GM12878 (cell line): ENCODE measurements at regions of chr7 and their contacts with region 1.

Region 1: DNA sequence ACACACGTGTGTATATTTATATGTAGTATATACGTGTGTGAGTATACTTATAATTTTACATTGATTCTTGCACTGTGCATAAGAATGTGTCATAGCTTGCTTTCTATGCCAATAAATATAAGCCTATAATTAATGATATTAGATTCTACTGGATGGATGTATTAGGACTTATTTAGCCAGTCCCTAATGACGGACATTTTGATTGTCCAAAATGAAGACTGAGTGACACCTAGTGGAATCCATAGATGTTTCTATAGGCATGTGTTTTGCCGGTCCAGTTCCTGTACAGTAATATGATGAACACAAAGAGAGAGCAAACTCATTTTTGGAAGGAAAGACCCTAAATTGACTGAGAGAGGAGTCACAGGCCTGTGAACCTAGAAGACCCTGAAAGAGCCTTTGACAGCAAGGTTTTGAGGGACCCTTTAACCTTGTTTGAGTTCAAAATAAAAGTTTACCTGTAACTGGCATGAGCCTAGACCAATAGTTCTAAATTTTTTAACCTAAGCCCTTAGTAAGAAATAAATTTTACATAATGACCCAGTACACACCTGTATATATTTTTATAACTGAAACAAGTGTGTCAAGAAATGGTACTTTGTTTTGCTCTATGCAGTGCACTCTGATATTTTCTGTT is 42.4 kb upstream of the AGBL3 start:
- DNase-seq: no peak
- ATAC-seq: peak; percentile 97
- H3K4me3 ChIP-seq: no peak overlapping the region
- H3K27ac ChIP-seq: no peak overlapping the region
- H3K4me1 ChIP-seq: no peaks in the 10 kb centered on the region
- H3K27me3 ChIP-seq: no peaks in the 10 kb centered on the region
- CTCF ChIP-seq: peak; percentile 49 to 66 (median 55)
- EP300 ChIP-seq: no peak
- POLR2A ChIP-seq: no peak
- RAD21 ChIP-seq: peak; percentile 88

Region 2: GRCh38 chr7:134514663-134515062 is 429.2 kb before region 1 on chr7:
- CTCF ChIA-PET with region 1: interaction called, 4 read pairs
- POLR2A ChIA-PET with region 1: no interaction called
- RAD21 ChIA-PET with region 1: no interaction called
- SMC1A ChIA-PET with region 1: no interaction called
- in situ Hi-C with region 1: no loop called
- intact Hi-C with region 1: loop called (anchors 10 kb)
- DNase-seq: peak; percentile 13
- ATAC-seq: peak; percentile 84
- H3K4me3 ChIP-seq: no peak overlapping the region
- H3K27ac ChIP-seq: no peak overlapping the region
- H3K4me1 ChIP-seq: no peaks in the 10 kb centered on the region
- H3K27me3 ChIP-seq: no peaks in the 10 kb centered on the region; a peak in 1 of 4 replicates
- CTCF ChIP-seq: peak; percentile 63 to 76 (median 73)
- EP300 ChIP-seq: no peak
- POLR2A ChIP-seq: no peak
- RAD21 ChIP-seq: peak; percentile 69

Region 3: DNA sequence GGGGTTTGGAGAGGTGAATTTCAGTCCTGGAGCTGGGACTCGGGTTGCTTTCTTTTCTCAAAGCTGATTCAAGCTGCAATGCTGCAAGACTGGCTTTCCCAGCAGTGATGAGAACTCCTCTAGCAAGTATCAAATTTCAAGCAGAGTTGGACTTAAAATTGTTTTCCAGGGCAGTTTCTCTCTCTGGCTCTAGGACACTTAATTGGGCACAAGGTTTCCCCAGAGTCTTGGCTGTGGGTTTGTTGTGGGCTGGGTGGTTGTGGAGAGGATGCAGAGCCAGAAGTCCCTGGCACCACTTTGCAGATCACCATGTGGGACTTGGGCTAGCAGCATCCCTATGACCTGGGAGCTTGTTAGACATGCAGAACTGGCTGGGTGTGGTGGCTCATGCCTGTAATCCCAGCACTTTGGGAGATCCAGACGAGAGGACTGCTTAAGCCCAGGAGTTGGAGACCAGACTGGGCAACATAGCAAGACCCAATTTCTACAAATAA is 378.2 kb before region 1 on chr7:
- CTCF ChIA-PET with region 1: no interaction called
- POLR2A ChIA-PET with region 1: no interaction called
- RAD21 ChIA-PET with region 1: no interaction called
- SMC1A ChIA-PET with region 1: no interaction called
- in situ Hi-C with region 1: no loop called
- intact Hi-C with region 1: no loop called
- DNase-seq: no peak
- ATAC-seq: no peak
- H3K4me3 ChIP-seq: no peak overlapping the region
- H3K27ac ChIP-seq: no peak overlapping the region
- H3K4me1 ChIP-seq: no peaks in the 10 kb centered on the region
- H3K27me3 ChIP-seq: no peaks in the 10 kb centered on the region
- CTCF ChIP-seq: no peak
- EP300 ChIP-seq: no peak
- POLR2A ChIP-seq: no peak
- RAD21 ChIP-seq: no peak

Region 4: DNA sequence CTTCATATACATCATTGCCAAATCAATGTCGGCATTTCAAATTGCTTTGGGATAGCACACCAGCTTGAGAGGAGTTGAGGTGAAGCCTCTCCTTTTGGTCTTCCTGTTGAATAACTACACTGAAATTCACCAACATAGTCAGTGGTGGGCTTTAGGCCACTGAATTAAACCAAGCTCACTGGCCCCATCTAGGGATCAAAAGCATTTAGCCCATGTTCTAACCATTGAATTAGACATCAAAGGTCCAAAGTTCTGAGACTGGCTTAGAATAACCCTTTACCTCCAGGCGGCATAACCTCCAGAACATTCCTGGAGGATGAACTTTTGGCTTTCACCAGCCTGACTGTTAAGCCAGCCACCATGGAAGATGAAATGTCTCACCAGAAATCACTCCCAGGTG is 242.6 kb before region 1 on chr7:
- CTCF ChIA-PET with region 1: interaction called, 7 read pairs
- POLR2A ChIA-PET with region 1: no interaction called
- RAD21 ChIA-PET with region 1: interaction called, 3 read pairs
- SMC1A ChIA-PET with region 1: interaction called, 8 read pairs
- in situ Hi-C with region 1: no loop called
- intact Hi-C with region 1: loop called (anchors 5 kb)
- DNase-seq: no peak
- ATAC-seq: peak; percentile 75
- H3K4me3 ChIP-seq: no peak overlapping the region
- H3K27ac ChIP-seq: no peak overlapping the region
- H3K4me1 ChIP-seq: no peaks in the 10 kb centered on the region
- H3K27me3 ChIP-seq: peaks cover 0 to 7% of the 10 kb centered on the region in 2 experiments; a peak in 3 of 4 replicates
- CTCF ChIP-seq: peak; percentile 29 to 56 (median 47); a peak in 5 of 6 replicates
- EP300 ChIP-seq: no peak
- POLR2A ChIP-seq: no peak
- RAD21 ChIP-seq: peak; percentile 62

Region 5: GRCh38 chr7:134750083-134751062 is 193.5 kb before region 1 on chr7:
- CTCF ChIA-PET with region 1: interaction called, 16 read pairs
- POLR2A ChIA-PET with region 1: no interaction called
- RAD21 ChIA-PET with region 1: interaction called, 7 read pairs
- SMC1A ChIA-PET with region 1: interaction called, 9 read pairs
- in situ Hi-C with region 1: no loop called
- intact Hi-C with region 1: loop called (anchors 10 kb)
- DNase-seq: no peak
- ATAC-seq: peak; percentile 94
- H3K4me3 ChIP-seq: no peak overlapping the region
- H3K27ac ChIP-seq: no peak overlapping the region
- H3K4me1 ChIP-seq: no peaks in the 10 kb centered on the region
- H3K27me3 ChIP-seq: 0 out of 4 replicates have a peak, but pooled peaks cover 0 to 2% of the 10 kb centered on the region in 2 experiments
- CTCF ChIP-seq: peak; percentile 62 to 97 (median 86)
- EP300 ChIP-seq: no peak
- POLR2A ChIP-seq: no peak
- RAD21 ChIP-seq: peak; percentile 68

Region 6: GRCh38 chr7:134878731-134879295 is 65.1 kb before region 1 on chr7:
- CTCF ChIA-PET with region 1: interaction called, 32 read pairs
- POLR2A ChIA-PET with region 1: interaction called, 3 read pairs
- RAD21 ChIA-PET with region 1: interaction called, 13 read pairs
- SMC1A ChIA-PET with region 1: interaction called, 16 read pairs
- in situ Hi-C with region 1: no loop called
- intact Hi-C with region 1: loop called (anchors 5 kb)
- DNase-seq: no peak
- ATAC-seq: peak; percentile 66
- H3K4me3 ChIP-seq: no peak overlapping the region
- H3K27ac ChIP-seq: no peak overlapping the region
- H3K4me1 ChIP-seq: no peaks in the 10 kb centered on the region
- H3K27me3 ChIP-seq: peaks cover 0 to 3% of the 10 kb centered on the region in 2 experiments; a peak in 2 of 4 replicates
- CTCF ChIP-seq: peak in 1 of 3 experiments; percentile 27; a peak in 1 of 6 replicates
- EP300 ChIP-seq: no peak
- POLR2A ChIP-seq: no peak
- RAD21 ChIP-seq: peak; percentile 43; the same call in 1 of the 2 replicates

Region 7: DNA sequence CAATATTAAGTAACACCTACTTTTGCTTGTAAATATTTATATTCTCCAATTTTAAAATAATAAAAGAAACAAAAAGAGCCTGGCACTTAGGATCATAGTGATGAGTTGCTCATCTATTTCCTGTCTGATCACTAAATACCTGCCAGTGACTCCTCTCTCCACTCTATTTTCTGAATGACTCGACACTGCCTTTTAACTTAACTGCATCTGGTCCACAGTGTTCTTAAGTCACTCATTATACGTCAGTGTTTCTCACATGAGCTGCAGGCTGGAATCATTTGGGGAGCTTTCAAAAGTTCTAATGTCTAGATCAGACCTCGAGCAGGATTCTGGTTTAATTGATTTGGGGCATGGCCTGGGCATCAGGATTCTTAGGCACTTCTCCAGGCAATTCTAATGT is 35.6 kb before region 1 on chr7:
- CTCF ChIA-PET with region 1: interaction called, 10 read pairs
- POLR2A ChIA-PET with region 1: interaction called, 3 read pairs
- RAD21 ChIA-PET with region 1: interaction called, 42 read pairs
- SMC1A ChIA-PET with region 1: interaction called, 9 read pairs
- in situ Hi-C with region 1: no loop called
- intact Hi-C with region 1: no loop called
- DNase-seq: no peak
- ATAC-seq: peak; percentile 78
- H3K4me3 ChIP-seq: no peak overlapping the region
- H3K27ac ChIP-seq: no peak overlapping the region
- H3K4me1 ChIP-seq: peaks cover 4% of the 10 kb centered on the region; the same call in 1 of the 2 replicates
- H3K27me3 ChIP-seq: no peaks in the 10 kb centered on the region
- CTCF ChIP-seq: no peak
- EP300 ChIP-seq: no peak
- POLR2A ChIP-seq: no peak
- RAD21 ChIP-seq: no peak

Region 8: DNA sequence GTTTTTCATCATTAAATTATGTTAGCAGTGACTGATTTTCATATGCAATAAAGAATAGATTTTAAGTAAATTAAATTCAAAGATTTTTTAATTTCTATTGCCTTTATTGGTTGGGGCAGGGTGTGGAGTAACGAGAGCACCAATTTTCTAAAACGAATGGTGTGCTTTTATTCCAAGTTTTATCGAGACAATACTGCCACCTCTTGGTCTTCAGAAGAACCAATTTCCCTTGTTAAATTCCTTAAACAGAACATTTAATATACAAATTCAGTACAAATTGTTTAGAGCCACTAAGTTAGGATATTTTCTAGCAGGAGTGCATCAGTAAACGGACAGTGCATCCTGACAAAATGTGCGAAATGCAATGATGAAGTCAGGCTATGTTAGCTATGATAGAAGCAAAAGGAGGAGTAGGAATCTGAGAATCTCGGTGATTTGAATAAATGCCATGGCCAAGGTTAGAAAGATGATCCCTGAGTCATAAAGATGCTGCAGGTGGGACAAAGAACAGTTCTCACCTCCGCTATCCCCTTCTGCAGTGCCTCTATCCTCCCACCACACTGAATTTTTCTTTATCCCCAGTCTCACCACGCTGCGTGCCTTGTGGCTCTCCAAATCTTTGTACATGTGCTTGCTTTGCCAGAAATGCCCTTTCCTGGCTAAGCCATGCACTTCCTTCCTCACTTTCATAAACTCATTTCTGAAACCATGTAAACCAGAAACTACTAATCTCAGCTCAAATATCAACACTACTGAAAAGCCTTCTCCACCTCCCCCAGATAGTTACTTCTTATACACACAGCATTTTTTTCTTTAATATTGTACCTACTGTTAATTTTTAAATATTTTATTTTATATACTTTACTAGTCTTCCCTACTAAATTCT is 10.6 kb after region 1 on chr7:
- CTCF ChIA-PET with region 1: interaction called, 10 read pairs
- POLR2A ChIA-PET with region 1: interaction called, 4 read pairs
- RAD21 ChIA-PET with region 1: interaction called, 6 read pairs
- SMC1A ChIA-PET with region 1: interaction called, 6 read pairs
- in situ Hi-C with region 1: no loop called
- intact Hi-C with region 1: no loop called
- DNase-seq: peak; percentile 15
- ATAC-seq: peak; percentile 83
- H3K4me3 ChIP-seq: no peak overlapping the region
- H3K27ac ChIP-seq: no peak overlapping the region
- H3K4me1 ChIP-seq: no peaks in the 10 kb centered on the region; the same call in 1 of the 2 replicates
- H3K27me3 ChIP-seq: no peaks in the 10 kb centered on the region
- CTCF ChIP-seq: peak; percentile 49 to 64 (median 58)
- EP300 ChIP-seq: no peak
- POLR2A ChIP-seq: no peak
- RAD21 ChIP-seq: peak; percentile 72

Region 9: GRCh38 chr7:135035252-135035651 is 91.4 kb after region 1 on chr7:
- CTCF ChIA-PET with region 1: no interaction called
- POLR2A ChIA-PET with region 1: no interaction called
- RAD21 ChIA-PET with region 1: no interaction called
- SMC1A ChIA-PET with region 1: no interaction called
- in situ Hi-C with region 1: no loop called
- intact Hi-C with region 1: no loop called
- DNase-seq: no peak
- ATAC-seq: no peak
- H3K4me3 ChIP-seq: no peak overlapping the region
- H3K27ac ChIP-seq: no peak overlapping the region
- H3K4me1 ChIP-seq: no peaks in the 10 kb centered on the region
- H3K27me3 ChIP-seq: no peaks in the 10 kb centered on the region
- CTCF ChIP-seq: no peak
- EP300 ChIP-seq: no peak
- POLR2A ChIP-seq: no peak
- RAD21 ChIP-seq: no peak

Region 10: GRCh38 chr7:135083005-135083404 is 139.1 kb after region 1 on chr7:
- CTCF ChIA-PET with region 1: no interaction called
- POLR2A ChIA-PET with region 1: no interaction called
- RAD21 ChIA-PET with region 1: no interaction called
- SMC1A ChIA-PET with region 1: no interaction called
- in situ Hi-C with region 1: no loop called
- intact Hi-C with region 1: no loop called
- DNase-seq: no peak
- ATAC-seq: no peak
- H3K4me3 ChIP-seq: no peak overlapping the region
- H3K27ac ChIP-seq: no peak overlapping the region
- H3K4me1 ChIP-seq: no peaks in the 10 kb centered on the region
- H3K27me3 ChIP-seq: no peaks in the 10 kb centered on the region
- CTCF ChIP-seq: no peak
- EP300 ChIP-seq: no peak
- POLR2A ChIP-seq: no peak
- RAD21 ChIP-seq: no peak